ENCODE measurements at regions of chr22 and their contacts with region 1.

Region 1: DNA sequence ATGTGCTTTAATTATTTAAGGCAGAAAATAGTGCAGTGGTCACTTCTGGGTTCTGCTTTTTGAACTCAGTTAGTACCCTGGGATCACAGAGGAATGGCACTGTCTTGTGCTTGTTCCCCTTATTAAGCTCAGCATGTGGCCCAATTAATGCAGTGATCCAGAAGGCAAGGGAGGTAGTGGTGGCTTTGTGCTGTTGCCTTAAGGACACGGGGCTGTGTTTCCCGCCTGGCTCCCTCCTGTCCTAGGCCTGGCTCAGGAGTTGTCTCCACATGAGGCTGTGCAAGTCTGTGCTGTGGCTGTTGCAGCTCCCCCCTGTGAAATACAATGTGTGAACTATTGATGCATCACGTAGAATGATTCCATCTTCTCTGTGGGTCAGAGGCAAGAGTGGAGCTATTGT is 49.2 kb upstream of the CABP7 start:
- DNase-seq: peak in 1 of 10 donors; percentile 49
- H3K4me3 ChIP-seq: no peak overlapping the region
- H3K27ac ChIP-seq: no peak overlapping the region
- H3K27me3 ChIP-seq: no peaks in the 10 kb centered on the region
- CTCF ChIP-seq: no peak

Region 2: GRCh38 chr22:29139965-29140782 is 530.5 kb before region 1 on chr22:
- intact Hi-C with region 1: loop called in 1 of 2 experiments (anchors 10 kb)
- DNase-seq: no peak
- H3K4me3 ChIP-seq: no peak overlapping the region
- H3K27ac ChIP-seq: peak overlapping the region in 4 of 59 donors; percentile 3 to 16 (median 14)
- H3K27me3 ChIP-seq: no peaks in the 10 kb centered on the region
- CTCF ChIP-seq: no peak

Region 3: DNA sequence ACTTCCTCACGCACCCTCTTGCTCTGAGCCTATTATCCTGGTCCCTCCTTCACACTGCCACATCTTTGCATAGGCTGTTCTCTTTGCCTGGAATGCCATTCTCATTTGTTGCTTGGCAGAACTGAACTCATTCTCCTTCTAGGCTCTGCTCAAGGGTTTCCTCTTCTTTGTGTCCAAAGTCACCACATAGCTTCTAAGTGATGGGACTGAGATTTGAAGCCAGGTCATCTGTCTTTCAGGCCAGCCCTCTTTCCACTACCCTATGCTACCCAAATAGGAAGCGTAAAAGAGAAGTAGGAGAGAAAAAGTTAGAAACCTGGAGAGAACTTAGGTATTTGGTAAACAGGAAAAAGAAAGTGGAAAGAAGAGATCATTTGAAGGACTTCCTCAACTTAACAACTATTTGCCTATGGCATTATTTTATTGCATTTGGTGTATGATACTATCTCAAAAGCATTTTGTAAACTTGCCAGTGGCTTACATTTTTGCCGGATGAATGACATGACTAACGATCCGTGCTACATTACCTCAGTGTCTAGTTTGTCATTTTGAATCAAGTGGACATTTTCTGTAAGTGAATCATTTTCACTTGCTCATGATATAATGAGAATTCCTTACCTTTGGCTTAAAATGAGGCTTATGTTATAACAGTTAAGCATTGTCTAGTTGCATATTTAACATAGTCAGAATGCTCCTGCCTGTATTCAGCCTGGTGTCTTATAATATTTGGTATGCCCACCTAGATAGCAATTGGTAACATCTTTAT is 48.7 kb before region 1 on chr22:
- intact Hi-C with region 1: no loop called
- DNase-seq: no peak
- H3K4me3 ChIP-seq: no peak overlapping the region
- H3K27ac ChIP-seq: peak overlapping the region in 1 of 59 donors; percentile 17
- H3K27me3 ChIP-seq: no peaks in the 10 kb centered on the region
- CTCF ChIP-seq: no peak

Measured in dorsolateral prefrontal cortex (tissue), 120 donors.